Aorta (tissue), 5 donors: ENCODE measurements at regions of chr9 and their contacts with region 1.

Region 1: GRCh38 chr9:2620919-2621679 is 488 bp upstream of the VLDLR start:
- DNase-seq: peak; percentile 86 to 92
- ATAC-seq: peak; percentile 81
- H3K4me3 ChIP-seq: peak overlapping the region; percentile 66 to 80
- H3K27ac ChIP-seq: no peak overlapping the region
- H3K4me1 ChIP-seq: no peaks in the 10 kb centered on the region
- H3K27me3 ChIP-seq: no peaks in the 10 kb centered on the region

Region 2: GRCh38 chr9:2014696-2015580 is 606.2 kb before region 1 on chr9 and contains the start of gene SMARCA2:
- intact Hi-C with region 1: loop called (anchors 5 kb)
- DNase-seq: peak; percentile 99
- ATAC-seq: peak; percentile 93
- H3K4me3 ChIP-seq: peak within 1 kb of the TSS; percentile 85 to 95
- H3K27ac ChIP-seq: peak within 1 kb of the TSS; percentile 79 to 93
- H3K4me1 ChIP-seq: peaks cover 0 to 3% of the 10 kb centered on the region in 2 donors
- H3K27me3 ChIP-seq: no peaks in the 10 kb centered on the region
- total RNA-seq, gene SMARCA2: 206 to 265 TPM

Region 3: DNA sequence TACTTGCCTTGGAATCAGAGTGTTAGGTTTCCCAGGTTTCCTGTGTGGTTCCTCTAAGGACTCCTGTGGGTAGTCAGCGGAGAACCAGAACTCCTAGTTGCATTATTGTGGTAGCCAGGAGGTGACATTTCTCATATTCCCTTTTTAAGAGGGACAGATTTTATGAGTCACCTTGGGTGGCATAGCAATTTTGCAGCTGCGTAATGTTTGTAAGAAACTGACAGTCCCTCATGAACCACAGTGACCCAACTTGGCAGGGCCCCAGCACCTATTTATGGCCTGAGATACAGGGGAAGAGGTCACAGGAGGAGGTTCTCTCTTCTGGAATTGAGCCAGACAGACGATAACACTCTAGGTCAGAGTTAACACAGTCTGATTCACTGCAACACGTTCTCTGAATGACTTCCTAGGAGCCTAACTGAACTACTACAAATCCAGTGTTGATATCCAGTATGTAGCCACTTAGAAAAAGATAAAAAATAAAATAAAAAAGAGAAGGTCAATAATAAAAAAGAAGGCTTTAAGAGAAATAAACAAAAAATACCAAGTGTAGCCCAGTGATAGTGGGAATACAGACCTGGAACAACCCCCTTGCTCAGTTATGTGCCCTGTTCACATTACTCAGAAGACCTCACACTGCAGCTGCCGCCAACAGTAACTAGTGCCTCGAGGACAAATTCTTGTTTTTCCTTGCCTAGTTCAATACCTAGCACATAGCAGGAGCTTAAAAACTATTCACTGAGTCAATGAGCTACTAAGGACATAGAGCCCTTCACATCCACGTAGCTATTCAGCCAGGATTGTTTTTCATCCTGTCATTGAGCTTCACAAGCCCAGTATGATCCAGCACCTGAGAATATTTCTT is 50.3 kb before region 1 on chr9:
- intact Hi-C with region 1: loop called in 1 of 2 experiments (anchors 5 kb)
- DNase-seq: peak; percentile 90 to 91
- ATAC-seq: peak; percentile 75
- H3K4me3 ChIP-seq: no peak overlapping the region
- H3K27ac ChIP-seq: peak overlapping the region in 1 of 2 donors; percentile 2
- H3K4me1 ChIP-seq: peaks cover 0 to 2% of the 10 kb centered on the region in 2 donors
- H3K27me3 ChIP-seq: no peaks in the 10 kb centered on the region

Region 4: DNA sequence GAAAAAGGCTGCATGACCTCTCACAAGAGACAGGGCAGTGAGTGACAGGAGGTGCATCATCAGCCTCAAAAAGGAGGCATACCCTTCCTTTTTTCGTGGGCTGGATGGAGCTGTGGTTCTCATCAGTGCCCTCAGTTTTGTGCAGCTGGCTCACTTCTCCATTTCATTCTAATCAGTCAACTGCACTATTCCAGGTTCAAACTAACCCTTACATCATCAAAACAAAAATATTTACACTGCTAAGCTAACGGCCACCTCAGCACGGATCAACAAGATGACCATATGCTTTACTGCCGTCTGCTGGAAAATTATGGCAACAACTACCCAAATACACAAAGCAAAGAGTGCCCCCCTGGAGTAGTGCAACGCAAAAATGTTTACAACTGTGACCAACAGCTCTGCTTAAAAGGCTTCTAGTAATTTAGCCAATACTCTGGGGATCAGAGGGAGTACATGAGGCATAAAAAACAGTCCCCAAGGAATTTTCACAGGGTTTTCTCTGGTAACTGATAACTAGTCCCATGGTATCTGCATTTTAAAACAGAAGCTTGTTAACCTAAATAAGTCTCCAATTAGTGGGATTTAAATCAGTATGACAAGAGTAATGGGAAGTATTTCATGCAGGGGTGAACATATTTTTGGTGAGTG is 107.0 kb after region 1 on chr9:
- intact Hi-C with region 1: loop called in 1 of 2 experiments (anchors 5 kb)
- DNase-seq: no peak
- ATAC-seq: peak; percentile 59
- H3K4me3 ChIP-seq: no peak overlapping the region
- H3K27ac ChIP-seq: no peak overlapping the region
- H3K4me1 ChIP-seq: peaks cover 0 to 3% of the 10 kb centered on the region in 2 donors
- H3K27me3 ChIP-seq: no peaks in the 10 kb centered on the region

Region 5: GRCh38 chr9:2816476-2817141 is 195.5 kb after region 1 on chr9:
- intact Hi-C with region 1: loop called (anchors 5 kb)
- DNase-seq: peak in 1 of 2 donors; percentile 64
- ATAC-seq: peak; percentile 86
- H3K4me3 ChIP-seq: no peak overlapping the region
- H3K27ac ChIP-seq: peak overlapping the region; percentile 84 to 99
- H3K4me1 ChIP-seq: peaks cover 2 to 5% of the 10 kb centered on the region in 2 donors
- H3K27me3 ChIP-seq: no peaks in the 10 kb centered on the region

Region 6: DNA sequence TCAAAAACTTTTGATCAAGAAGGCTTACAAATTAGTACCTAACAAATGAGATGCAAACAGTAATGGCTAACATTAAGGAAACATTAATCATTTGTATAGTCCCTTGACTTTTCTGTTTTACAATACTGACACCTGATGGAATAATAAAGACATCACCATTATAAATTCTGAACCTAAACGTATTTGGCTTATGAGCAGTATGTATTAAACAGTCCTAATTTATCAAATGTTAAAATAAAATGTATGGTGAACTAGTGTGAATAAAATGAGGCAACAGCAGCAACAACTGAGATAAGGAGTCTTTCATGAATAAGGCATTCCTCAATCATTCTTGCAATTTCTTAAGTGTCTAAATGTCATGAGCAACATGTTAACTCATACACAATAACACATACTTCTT is 216.8 kb after region 1 on chr9:
- intact Hi-C with region 1: loop called (anchors 5 to 10 kb)
- DNase-seq: no peak
- ATAC-seq: no peak
- H3K4me3 ChIP-seq: no peak overlapping the region
- H3K27ac ChIP-seq: peak overlapping the region in 1 of 2 donors; percentile 30
- H3K4me1 ChIP-seq: peaks cover 0 to 17% of the 10 kb centered on the region in 2 donors
- H3K27me3 ChIP-seq: no peaks in the 10 kb centered on the region

Region 7: GRCh38 chr9:2849941-2850340 is 228.8 kb after region 1 on chr9:
- intact Hi-C with region 1: loop called in 1 of 2 experiments (anchors 10 kb)
- DNase-seq: no peak
- ATAC-seq: no peak
- H3K4me3 ChIP-seq: no peak overlapping the region
- H3K27ac ChIP-seq: no peak overlapping the region
- H3K4me1 ChIP-seq: peaks cover 0 to 2% of the 10 kb centered on the region in 2 donors
- H3K27me3 ChIP-seq: no peaks in the 10 kb centered on the region